ENCODE measurements at regions of chr7 and their contacts with region 1.

Region 1: DNA sequence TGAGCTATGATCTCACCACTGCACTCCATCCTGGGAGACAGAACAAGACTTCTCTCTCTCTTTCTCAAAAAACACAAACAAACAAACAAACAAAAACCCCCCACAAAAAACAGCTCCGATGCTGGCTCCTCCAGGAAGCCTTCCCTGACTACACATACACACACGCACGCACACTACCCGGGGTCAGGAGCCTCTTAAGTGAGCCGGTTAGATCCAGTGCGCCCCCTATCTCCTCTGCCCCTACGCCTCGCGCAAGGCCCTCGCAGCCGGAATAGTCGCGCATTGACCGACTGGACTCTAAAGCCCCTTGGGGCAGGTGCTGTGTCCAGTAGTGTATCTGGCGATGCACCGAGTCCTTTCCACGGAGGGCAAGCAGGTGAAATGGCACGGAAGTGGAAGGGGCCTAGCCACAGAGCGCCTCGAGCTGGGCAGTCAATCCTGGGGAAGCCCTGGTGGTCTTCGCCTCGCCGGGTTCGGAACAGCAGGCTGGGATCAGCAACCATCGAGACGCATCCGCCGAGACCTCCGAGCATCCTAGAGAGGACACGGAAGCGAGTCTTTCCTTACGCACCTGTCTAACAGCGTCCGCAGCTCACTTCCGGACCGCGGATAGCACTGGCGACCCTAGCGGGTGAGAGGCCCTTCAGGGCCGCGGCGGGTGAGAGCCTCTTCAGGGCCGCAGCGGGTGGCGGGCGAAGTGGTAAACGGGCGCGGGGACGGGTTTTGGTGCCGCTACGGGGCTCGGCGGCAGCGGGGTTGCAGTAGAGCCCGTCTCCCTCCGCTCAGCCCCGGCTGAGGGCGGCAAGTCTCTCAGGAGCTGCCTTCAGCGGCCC is at the start of gene ZSCAN25:
- DNase-seq: peak; percentile 85
- H3K4me3 Mint-ChIP-seq: peak within 1 kb of the TSS; percentile 83
- H3K27ac Mint-ChIP-seq: peak within 1 kb of the TSS; percentile 73
- H3K4me1 Mint-ChIP-seq: peaks cover 33% of the 10 kb centered on the region
- H3K27me3 Mint-ChIP-seq: peaks cover 11% of the 10 kb centered on the region
- CTCF ChIP-seq: no peak
- total RNA-seq, gene ZSCAN25: 12.9 and 13.5 TPM in 2 replicates

Region 2: GRCh38 chr7:99499721-99500636 is 116.6 kb before region 1 on chr7 and contains the start of gene ZNF394:
- CTCF ChIA-PET with region 1: no interaction called
- intact Hi-C with region 1: loop called (anchors 10 kb)
- DNase-seq: peak; percentile 86
- H3K4me3 Mint-ChIP-seq: peak within 1 kb of the TSS; percentile 88
- H3K27ac Mint-ChIP-seq: peak within 1 kb of the TSS; percentile 96
- H3K4me1 Mint-ChIP-seq: peaks cover 9% of the 10 kb centered on the region
- H3K27me3 Mint-ChIP-seq: no peaks in the 10 kb centered on the region
- CTCF ChIP-seq: no peak
- total RNA-seq, gene ZNF394: 17.3 and 19.2 TPM in 2 replicates

Region 3: GRCh38 chr7:99525713-99526440 is 90.7 kb before region 1 on chr7:
- CTCF ChIA-PET with region 1: interaction called, 12 read pairs
- intact Hi-C with region 1: no loop called
- DNase-seq: peak; percentile 10
- H3K4me3 Mint-ChIP-seq: no peak overlapping the region
- H3K27ac Mint-ChIP-seq: no peak overlapping the region
- H3K4me1 Mint-ChIP-seq: no peaks in the 10 kb centered on the region
- H3K27me3 Mint-ChIP-seq: no peaks in the 10 kb centered on the region
- CTCF ChIP-seq: no peak

Region 4: GRCh38 chr7:99719996-99720769 is 103.6 kb after region 1 on chr7:
- CTCF ChIA-PET with region 1: no interaction called
- intact Hi-C with region 1: no loop called
- DNase-seq: peak; percentile 11
- H3K4me3 Mint-ChIP-seq: peak overlapping the region; percentile 22
- H3K27ac Mint-ChIP-seq: peak overlapping the region; percentile 44
- H3K4me1 Mint-ChIP-seq: peaks cover 17% of the 10 kb centered on the region
- H3K27me3 Mint-ChIP-seq: no peaks in the 10 kb centered on the region
- CTCF ChIP-seq: no peak

Measured in Calu3 (cell line).